GM12878 (cell line): ENCODE measurements at regions of chr6 and their contacts with region 1.

Region 1: DNA sequence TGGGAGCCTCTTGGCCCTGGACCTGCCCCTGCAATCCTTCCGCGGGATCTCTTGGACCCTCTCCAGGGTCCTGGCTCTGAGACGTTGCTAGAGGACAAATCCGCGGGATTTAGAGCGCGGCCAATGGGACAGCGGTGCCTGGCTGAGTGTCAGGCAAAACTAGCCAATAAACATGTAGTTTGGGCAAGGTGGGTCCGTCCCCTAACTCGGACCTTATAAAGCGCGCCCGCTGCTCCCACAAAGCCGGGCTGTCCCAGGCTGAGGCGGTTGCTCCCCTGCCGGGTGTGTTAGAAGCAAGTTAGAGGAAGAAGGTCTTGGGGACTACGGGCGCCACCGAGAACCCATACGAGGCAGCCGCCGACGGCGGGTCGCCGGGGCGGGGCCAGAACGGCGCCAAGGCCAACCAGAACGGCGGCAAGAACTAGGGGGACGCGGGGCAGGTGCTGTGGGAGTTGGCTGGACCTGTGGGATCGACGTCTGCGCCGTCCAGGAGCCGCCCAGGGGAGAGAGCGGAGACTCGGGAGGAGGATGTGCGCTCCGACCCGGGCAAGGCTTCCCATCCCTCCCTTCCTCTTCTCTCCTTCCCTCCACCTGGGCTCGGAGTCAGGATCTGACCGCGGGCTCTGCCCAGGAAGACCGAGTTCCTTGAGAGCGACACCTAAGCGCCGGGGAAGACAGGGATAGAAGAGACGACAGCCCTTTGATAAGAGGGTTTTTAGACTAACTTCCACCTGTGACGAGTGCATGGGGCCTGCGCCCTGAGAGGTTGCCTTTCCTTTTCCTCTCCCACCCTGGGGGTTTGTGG is 6.5 kb upstream of the TMEM14A start:
- DNase-seq: peak; percentile 83
- ATAC-seq: peak; percentile 94
- H3K4me3 ChIP-seq: peak overlapping the region; percentile 73
- H3K27ac ChIP-seq: peak overlapping the region; percentile 30
- H3K4me1 ChIP-seq: peaks cover 24% of the 10 kb centered on the region
- H3K27me3 ChIP-seq: no peaks in the 10 kb centered on the region
- CTCF ChIP-seq: no peak
- EP300 ChIP-seq: no peak
- POLR2A ChIP-seq: peak; percentile 95
- RAD21 ChIP-seq: no peak

Region 2: GRCh38 chr6:52297433-52297832 is 367.0 kb before region 1 on chr6:
- CTCF ChIA-PET with region 1: no interaction called
- POLR2A ChIA-PET with region 1: no interaction called
- RAD21 ChIA-PET with region 1: no interaction called
- SMC1A ChIA-PET with region 1: no interaction called
- in situ Hi-C with region 1: loop called (anchors 5 kb)
- intact Hi-C with region 1: no loop called
- DNase-seq: no peak
- ATAC-seq: peak; percentile 70
- H3K4me3 ChIP-seq: peak overlapping the region; percentile 19; the same call in 1 of the 2 replicates
- H3K27ac ChIP-seq: peak overlapping the region; percentile 86
- H3K4me1 ChIP-seq: peaks cover 51% of the 10 kb centered on the region
- H3K27me3 ChIP-seq: no peaks in the 10 kb centered on the region
- CTCF ChIP-seq: 0 out of 6 replicates have a peak, but pooled peaks of 1 of the 3 experiments have one; percentile 9
- EP300 ChIP-seq: no peak
- POLR2A ChIP-seq: no peak
- RAD21 ChIP-seq: peak; percentile 32; the same call in 1 of the 2 replicates

Region 3: DNA sequence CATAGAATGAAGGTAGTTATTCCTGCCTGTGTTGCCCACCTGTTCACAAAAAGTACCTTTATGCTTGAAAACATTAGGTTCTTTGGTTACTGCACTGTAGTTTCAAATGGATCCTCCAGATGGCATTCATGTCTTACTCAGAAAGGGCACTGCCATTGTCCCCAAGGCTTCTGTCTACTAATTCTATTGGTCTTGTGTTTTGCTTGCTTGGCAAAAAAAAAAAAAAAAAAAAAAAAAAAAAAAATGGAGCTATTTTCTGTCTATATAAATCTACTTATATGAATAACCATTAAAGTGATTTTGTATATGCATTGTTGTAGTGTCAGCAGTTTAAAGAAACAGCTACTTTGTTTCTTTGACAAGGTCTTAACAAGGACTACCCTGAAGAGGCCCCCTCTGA is 256.9 kb before region 1 on chr6:
- CTCF ChIA-PET with region 1: interaction called, 20 read pairs
- POLR2A ChIA-PET with region 1: interaction called, 9 read pairs
- RAD21 ChIA-PET with region 1: interaction called, 5 read pairs
- SMC1A ChIA-PET with region 1: interaction called, 17 read pairs
- in situ Hi-C with region 1: no loop called
- intact Hi-C with region 1: loop called (anchors 1 kb)
- DNase-seq: no peak
- ATAC-seq: peak; percentile 91
- H3K4me3 ChIP-seq: no peak overlapping the region
- H3K27ac ChIP-seq: no peak overlapping the region
- H3K4me1 ChIP-seq: no peaks in the 10 kb centered on the region
- H3K27me3 ChIP-seq: no peaks in the 10 kb centered on the region
- CTCF ChIP-seq: peak; percentile 50 to 59 (median 57); a peak in 5 of 6 replicates
- EP300 ChIP-seq: no peak
- POLR2A ChIP-seq: no peak
- RAD21 ChIP-seq: peak; percentile 70

Region 4: GRCh38 chr6:52497652-52498408 is 166.6 kb before region 1 on chr6:
- CTCF ChIA-PET with region 1: interaction called, 21 read pairs
- POLR2A ChIA-PET with region 1: interaction called, 3 read pairs
- RAD21 ChIA-PET with region 1: interaction called, 23 read pairs
- SMC1A ChIA-PET with region 1: interaction called, 13 read pairs
- in situ Hi-C with region 1: loop called (anchors 5 kb)
- intact Hi-C with region 1: loop called (anchors 2 kb)
- DNase-seq: peak; percentile 95
- ATAC-seq: peak; percentile 87
- H3K4me3 ChIP-seq: peak overlapping the region; percentile 61
- H3K27ac ChIP-seq: peak overlapping the region; percentile 96
- H3K4me1 ChIP-seq: peaks cover 64% of the 10 kb centered on the region
- H3K27me3 ChIP-seq: no peaks in the 10 kb centered on the region
- CTCF ChIP-seq: no peak
- EP300 ChIP-seq: peak; percentile 94 to 95
- POLR2A ChIP-seq: no peak; the same call in 1 of the 2 replicates
- RAD21 ChIP-seq: no peak

Region 5: GRCh38 chr6:52598123-52598823 is 66.1 kb before region 1 on chr6:
- CTCF ChIA-PET with region 1: interaction called, 5 read pairs
- POLR2A ChIA-PET with region 1: no interaction called
- RAD21 ChIA-PET with region 1: interaction called, 7 read pairs
- SMC1A ChIA-PET with region 1: interaction called, 8 read pairs
- in situ Hi-C with region 1: no loop called
- intact Hi-C with region 1: loop called (anchors 5 kb)
- DNase-seq: no peak
- ATAC-seq: peak; percentile 53
- H3K4me3 ChIP-seq: no peak overlapping the region
- H3K27ac ChIP-seq: no peak overlapping the region
- H3K4me1 ChIP-seq: peaks cover 30% of the 10 kb centered on the region
- H3K27me3 ChIP-seq: no peaks in the 10 kb centered on the region
- CTCF ChIP-seq: peak; percentile 41 to 60 (median 51)
- EP300 ChIP-seq: no peak
- POLR2A ChIP-seq: no peak
- RAD21 ChIP-seq: peak; percentile 56

Region 6: DNA sequence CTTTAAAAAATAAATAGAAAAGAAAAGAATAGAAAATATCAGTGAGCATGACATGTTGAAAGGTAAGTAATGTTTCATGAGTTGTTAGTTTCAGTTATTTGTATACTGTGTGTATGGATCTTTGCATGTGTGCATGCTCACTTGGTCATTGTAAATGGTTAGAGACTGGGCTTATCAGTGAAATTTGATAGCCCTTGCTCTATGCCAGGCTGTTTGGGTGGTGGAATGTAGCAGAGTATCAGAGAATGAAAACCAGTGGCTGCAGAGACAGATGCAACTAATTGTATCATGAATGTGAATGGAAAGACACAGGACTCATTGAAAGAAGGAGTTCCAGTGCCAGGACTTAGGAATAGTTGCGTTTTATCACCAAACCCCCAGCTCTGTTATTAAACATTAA is 94.7 kb after region 1 on chr6:
- CTCF ChIA-PET with region 1: no interaction called
- POLR2A ChIA-PET with region 1: no interaction called
- RAD21 ChIA-PET with region 1: no interaction called
- SMC1A ChIA-PET with region 1: no interaction called
- in situ Hi-C with region 1: no loop called
- intact Hi-C with region 1: no loop called
- DNase-seq: no peak
- ATAC-seq: no peak
- H3K4me3 ChIP-seq: no peak overlapping the region
- H3K27ac ChIP-seq: no peak overlapping the region
- H3K4me1 ChIP-seq: no peaks in the 10 kb centered on the region
- H3K27me3 ChIP-seq: no peaks in the 10 kb centered on the region
- CTCF ChIP-seq: no peak
- EP300 ChIP-seq: no peak
- POLR2A ChIP-seq: no peak
- RAD21 ChIP-seq: no peak

Region 7: DNA sequence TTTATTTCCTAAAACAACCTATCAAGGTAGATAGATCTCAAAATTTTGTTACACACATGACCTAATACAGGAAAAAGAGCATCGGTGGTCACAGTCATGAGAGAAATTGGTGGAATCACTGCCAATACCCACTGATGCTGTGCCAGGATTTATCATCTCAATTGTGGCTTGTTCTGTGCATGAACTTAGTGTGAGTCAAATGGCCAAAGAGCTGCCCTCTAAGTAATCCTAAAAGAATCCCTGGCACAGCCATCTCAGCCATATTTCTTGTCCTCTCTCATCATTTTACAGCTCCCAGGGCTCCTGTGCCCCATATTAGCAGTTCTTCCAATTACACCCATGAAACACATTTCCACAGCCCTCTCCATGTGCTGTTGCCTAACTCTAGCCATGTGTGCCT is 170.1 kb after region 1 on chr6:
- CTCF ChIA-PET with region 1: no interaction called
- POLR2A ChIA-PET with region 1: no interaction called
- RAD21 ChIA-PET with region 1: no interaction called
- SMC1A ChIA-PET with region 1: no interaction called
- in situ Hi-C with region 1: no loop called
- intact Hi-C with region 1: no loop called
- DNase-seq: no peak
- ATAC-seq: no peak
- H3K4me3 ChIP-seq: no peak overlapping the region
- H3K27ac ChIP-seq: no peak overlapping the region
- H3K4me1 ChIP-seq: no peaks in the 10 kb centered on the region
- H3K27me3 ChIP-seq: no peaks in the 10 kb centered on the region; a peak in 1 of 4 replicates
- CTCF ChIP-seq: no peak
- EP300 ChIP-seq: no peak
- POLR2A ChIP-seq: no peak
- RAD21 ChIP-seq: no peak

Region 8: DNA sequence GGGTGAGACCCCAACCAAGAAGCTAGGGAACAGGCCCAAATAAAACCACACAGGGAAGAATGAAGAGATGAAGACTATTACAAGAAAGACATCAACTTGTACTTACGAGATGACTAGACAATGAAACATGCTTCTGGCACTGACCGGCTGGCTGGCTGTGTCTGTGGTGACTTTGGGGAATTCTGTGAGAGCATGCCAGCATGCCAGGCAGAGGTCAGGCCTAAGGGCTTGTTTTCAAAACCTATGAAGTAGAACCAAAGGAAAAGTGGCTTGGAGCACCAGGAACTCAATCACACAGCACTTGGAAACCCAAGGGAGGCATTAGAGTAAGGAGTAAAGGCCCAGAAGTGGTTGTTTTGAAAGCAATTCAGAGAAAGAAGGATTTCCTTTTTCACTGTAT is 273.5 kb after region 1 on chr6:
- CTCF ChIA-PET with region 1: no interaction called
- POLR2A ChIA-PET with region 1: no interaction called
- RAD21 ChIA-PET with region 1: no interaction called
- SMC1A ChIA-PET with region 1: no interaction called
- in situ Hi-C with region 1: no loop called
- intact Hi-C with region 1: no loop called
- DNase-seq: no peak
- ATAC-seq: peak; percentile 30; the same call in 1 of the 3 replicates
- H3K4me3 ChIP-seq: no peak overlapping the region
- H3K27ac ChIP-seq: no peak overlapping the region
- H3K4me1 ChIP-seq: no peaks in the 10 kb centered on the region
- H3K27me3 ChIP-seq: no peaks in the 10 kb centered on the region
- CTCF ChIP-seq: no peak
- EP300 ChIP-seq: no peak
- POLR2A ChIP-seq: no peak
- RAD21 ChIP-seq: no peak